HepG2 (cell line): ENCODE measurements at regions of chr4 and their contacts with region 1.

Region 1: GRCh38 chr4:102344954-102345794 is at the start of gene SLC39A8:
- DNase-seq: peak; percentile 41
- ATAC-seq: peak; percentile 94
- H3K4me3 ChIP-seq: peak within 1 kb of the TSS; percentile 48 to 72 (median 55)
- H3K27ac ChIP-seq: no peak within 1 kb of the TSS
- H3K4me1 ChIP-seq: peaks cover 23% of the 10 kb centered on the region
- H3K27me3 ChIP-seq: peaks cover 2 to 35% of the 10 kb centered on the region in 2 experiments; a peak in 4 of 5 replicates
- CTCF ChIP-seq: peak; percentile 82
- EP300 ChIP-seq: no peak
- POLR2A ChIP-seq: no peak
- RAD21 ChIP-seq: peak; percentile 62
- total RNA-seq, gene SLC39A8: 0.38 and 0.41 TPM in 2 replicates

Region 2: DNA sequence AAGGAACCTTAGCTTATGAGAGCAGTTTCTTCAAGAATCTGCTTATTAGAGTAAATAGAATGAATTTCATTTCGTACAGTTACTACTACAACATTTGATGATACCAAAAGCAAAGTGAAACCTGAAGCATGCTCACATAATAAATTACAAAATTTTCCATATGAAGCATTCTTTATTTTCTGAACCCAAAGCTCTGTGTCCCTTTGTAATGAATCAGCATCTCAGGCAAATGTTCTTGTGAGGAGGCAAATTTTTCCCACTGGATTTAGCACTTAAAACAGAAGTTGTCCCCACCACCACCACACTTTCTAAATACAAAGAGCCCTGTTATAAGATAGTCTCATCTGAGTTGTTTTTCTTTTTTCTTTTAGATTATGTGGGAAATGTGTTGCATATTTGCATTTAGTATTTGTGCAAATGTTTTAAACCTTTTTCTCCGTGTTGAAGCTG is 85.3 kb after region 1 on chr4:
- CTCF ChIA-PET with region 1: interaction called, 10 read pairs
- POLR2A ChIA-PET with region 1: no interaction called
- in situ Hi-C with region 1: no loop called
- intact Hi-C with region 1: loop called (anchors 1 kb)
- DNase-seq: no peak
- ATAC-seq: no peak
- H3K4me3 ChIP-seq: peak overlapping the region; percentile 57 to 78 (median 63)
- H3K27ac ChIP-seq: peak overlapping the region; percentile 42
- H3K4me1 ChIP-seq: peaks cover 18% of the 10 kb centered on the region
- H3K27me3 ChIP-seq: no peaks in the 10 kb centered on the region; a peak in 1 of 5 replicates
- CTCF ChIP-seq: no peak
- EP300 ChIP-seq: no peak
- POLR2A ChIP-seq: no peak
- RAD21 ChIP-seq: no peak

Region 3: DNA sequence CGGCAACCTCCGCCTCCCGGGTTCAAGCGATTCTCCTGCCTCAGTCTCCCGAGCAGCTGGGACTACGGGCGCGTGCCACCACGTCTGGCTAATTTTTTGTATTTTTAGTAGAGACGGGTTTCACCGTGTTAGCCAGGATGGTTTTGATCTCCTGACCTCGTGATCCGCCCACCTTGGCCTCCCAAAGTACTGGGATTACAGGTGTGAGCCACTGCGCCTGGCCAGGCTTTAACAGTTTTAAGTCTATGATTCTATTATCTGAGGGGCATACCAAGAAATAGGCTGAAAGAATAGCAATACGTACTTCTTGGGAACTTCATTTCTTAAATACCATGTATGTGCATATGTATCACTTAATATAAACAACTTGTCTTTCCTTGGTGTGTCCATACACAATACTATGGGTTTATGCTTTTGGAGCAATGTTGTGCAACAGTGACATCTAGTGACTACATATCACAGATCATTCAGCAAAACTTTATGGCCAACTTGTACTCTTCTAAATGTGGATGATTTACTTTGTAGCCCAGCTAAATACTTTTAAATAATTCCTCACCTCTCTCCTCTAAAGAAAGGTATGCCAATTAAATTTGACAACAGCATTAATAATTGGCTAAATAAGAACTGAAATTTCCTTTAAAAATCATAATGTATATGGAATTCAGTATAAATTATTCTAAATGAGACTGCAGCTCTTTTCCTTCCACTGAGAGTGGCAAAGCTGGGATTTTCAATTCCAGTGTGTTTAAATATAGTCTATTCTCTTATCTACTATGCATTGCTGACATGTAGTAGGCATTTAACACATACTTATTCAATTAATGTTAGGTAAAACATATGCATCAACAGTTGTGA is 663.9 kb after region 1 on chr4:
- CTCF ChIA-PET with region 1: no interaction called
- POLR2A ChIA-PET with region 1: no interaction called
- in situ Hi-C with region 1: no loop called
- intact Hi-C with region 1: loop called (anchors 10 kb)
- DNase-seq: peak; percentile 72
- ATAC-seq: peak; percentile 94
- H3K4me3 ChIP-seq: no peak overlapping the region
- H3K27ac ChIP-seq: no peak overlapping the region
- H3K4me1 ChIP-seq: peaks cover 13% of the 10 kb centered on the region; the same call in 1 of the 2 replicates
- H3K27me3 ChIP-seq: no peaks in the 10 kb centered on the region
- CTCF ChIP-seq: peak; percentile 90
- EP300 ChIP-seq: no peak
- POLR2A ChIP-seq: no peak
- RAD21 ChIP-seq: peak; percentile 68